Activated CD8-positive, alpha-beta T cell treated with anti-CD3 and anti-CD28 coated beads for 36 hours (primary cell): ENCODE measurements at regions of chr2 and their contacts with region 1.

Region 1: DNA sequence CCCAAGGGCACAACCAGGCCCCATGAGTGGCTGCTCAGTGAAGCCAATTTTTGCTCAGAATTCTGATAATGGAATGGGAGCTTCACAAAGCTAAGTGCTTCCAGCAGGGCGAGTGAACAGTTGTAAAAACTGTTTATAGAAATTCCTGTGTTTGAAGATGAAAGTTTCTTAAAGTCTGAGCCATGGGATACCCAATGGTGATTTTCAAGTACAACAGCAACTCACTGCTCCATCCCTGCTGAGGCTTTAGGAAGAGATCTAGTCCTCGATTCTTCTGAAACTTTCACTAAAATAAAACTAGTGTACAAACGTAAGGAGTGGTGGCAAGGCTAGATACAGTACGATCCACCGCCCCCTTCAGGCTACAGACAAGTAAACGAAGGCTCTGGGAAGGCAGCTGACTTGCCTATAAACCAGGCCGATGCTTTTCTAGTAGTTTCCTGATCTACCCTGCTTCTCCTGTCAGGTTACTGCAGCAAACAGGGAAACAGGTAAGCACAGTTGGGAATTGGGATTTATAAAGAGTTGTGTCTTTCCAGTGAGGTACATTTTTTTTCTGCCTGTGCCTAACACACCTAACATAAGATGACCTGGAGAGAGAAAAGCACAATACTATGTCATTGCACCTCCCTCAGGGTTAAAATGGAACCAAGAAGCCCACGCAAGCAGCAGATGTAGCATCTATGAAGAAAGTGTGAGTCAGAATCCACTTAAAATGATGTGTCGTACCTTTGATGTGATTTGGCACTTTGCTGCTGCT is 108.7 kb downstream of the UXS1 start:
- DNase-seq: peak; percentile 83
- ATAC-seq: peak; percentile 96
- H3K4me3 Mint-ChIP-seq: peak overlapping the region; percentile 66
- H3K27ac Mint-ChIP-seq: peak overlapping the region; percentile 93
- H3K4me1 Mint-ChIP-seq: peaks cover 68% of the 10 kb centered on the region
- H3K27me3 Mint-ChIP-seq: no peaks in the 10 kb centered on the region
- CTCF ChIP-seq: peak; percentile 60

Region 2: DNA sequence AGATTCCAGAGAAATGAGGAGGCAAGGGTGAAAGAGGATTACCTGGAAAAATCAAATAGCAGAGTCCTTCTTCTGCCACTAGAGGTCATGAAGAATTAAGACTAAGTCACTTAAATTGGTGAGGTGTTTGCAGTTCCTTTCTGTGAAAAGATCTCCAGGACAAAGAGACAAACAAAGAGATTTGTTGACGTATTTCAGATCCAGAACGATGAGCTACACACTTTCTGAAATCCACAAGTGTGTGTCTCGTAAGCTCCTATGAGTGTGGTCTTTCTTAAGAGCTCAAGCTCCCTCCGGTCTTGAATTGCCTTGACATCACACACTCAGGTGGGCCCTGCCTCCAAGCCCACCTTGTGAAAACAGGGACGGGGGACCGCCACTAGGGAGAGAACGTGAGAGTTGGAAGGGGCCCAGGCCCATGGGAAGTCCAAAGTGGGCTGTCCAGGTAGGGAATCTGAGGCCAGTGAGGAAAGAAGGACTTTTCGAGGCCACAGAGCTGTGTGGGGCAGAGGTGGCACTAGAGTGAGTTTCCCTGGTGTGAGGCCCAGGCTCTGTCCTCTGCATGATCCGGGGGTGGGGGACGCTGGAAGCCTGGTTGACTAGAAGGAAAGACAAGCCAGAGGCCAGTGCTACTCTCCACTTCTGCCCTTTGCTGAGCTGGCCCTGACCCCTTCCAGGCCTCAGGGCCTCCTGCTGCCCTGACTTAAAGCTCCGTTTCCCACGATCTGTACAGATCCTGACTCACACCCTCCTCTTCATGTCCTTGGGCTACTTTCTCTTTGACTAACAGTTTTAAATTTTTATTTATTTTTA is 508.7 kb before region 1 on chr2:
- CTCF ChIA-PET with region 1: interaction called, 16 read pairs
- POLR2A ChIA-PET with region 1: no interaction called
- intact Hi-C with region 1: no loop called
- DNase-seq: no peak
- ATAC-seq: peak; percentile 66
- H3K4me3 Mint-ChIP-seq: no peak overlapping the region
- H3K27ac Mint-ChIP-seq: peak overlapping the region; percentile 66
- H3K4me1 Mint-ChIP-seq: peaks cover 28% of the 10 kb centered on the region
- H3K27me3 Mint-ChIP-seq: no peaks in the 10 kb centered on the region
- CTCF ChIP-seq: peak; percentile 73

Region 3: DNA sequence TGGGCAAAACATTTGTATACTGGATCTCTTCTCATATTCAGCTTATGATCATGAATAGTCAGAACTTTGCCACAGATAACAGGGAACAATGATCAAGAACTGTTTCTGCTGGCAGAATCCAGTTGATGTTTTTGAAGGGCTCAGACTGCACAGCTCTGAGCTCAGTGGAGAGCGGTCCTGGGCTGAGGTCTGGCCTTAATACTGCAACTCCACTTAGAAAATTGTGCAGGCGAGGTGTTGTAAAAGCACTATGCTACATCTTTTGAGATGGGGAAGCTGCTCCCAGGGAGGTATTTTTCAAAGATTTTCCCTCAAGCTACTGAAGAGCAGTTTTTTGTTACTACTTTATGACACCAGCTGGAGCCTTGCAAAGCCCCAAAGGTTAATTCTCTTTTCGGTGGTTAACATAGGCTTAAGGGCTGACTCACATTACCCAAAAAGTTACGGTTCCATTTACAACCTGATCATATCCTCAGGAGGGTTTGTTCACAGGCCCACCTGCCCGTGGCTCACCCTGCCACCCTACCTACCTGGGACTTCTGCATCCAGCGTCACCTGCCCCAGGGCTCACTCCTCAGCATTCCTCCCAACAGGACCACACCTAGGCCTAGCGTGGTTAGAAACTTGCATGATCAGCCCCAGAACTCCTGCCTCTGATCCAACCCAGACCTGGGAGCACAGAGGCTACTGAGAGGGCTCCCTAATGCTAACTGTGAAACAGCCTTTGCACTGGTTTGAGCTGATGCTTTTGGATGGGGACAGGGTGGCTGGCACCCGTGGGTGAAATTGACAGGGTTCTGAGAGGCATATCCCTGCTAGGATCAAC is 226.3 kb before region 1 on chr2:
- CTCF ChIA-PET with region 1: interaction called, 4 read pairs
- POLR2A ChIA-PET with region 1: no interaction called
- intact Hi-C with region 1: loop called (anchors 5 kb)
- DNase-seq: peak; percentile 62
- ATAC-seq: peak; percentile 64
- H3K4me3 Mint-ChIP-seq: peak overlapping the region; percentile 27
- H3K27ac Mint-ChIP-seq: peak overlapping the region; percentile 92
- H3K4me1 Mint-ChIP-seq: peaks cover 93% of the 10 kb centered on the region
- H3K27me3 Mint-ChIP-seq: no peaks in the 10 kb centered on the region
- CTCF ChIP-seq: no peak

Region 4: GRCh38 chr2:106068451-106068850 is 16.9 kb before region 1 on chr2:
- CTCF ChIA-PET with region 1: interaction called, 11 read pairs
- POLR2A ChIA-PET with region 1: interaction called, 5 read pairs
- intact Hi-C with region 1: no loop called
- DNase-seq: no peak
- ATAC-seq: no peak
- H3K4me3 Mint-ChIP-seq: no peak overlapping the region
- H3K27ac Mint-ChIP-seq: no peak overlapping the region
- H3K4me1 Mint-ChIP-seq: peaks cover 19% of the 10 kb centered on the region
- H3K27me3 Mint-ChIP-seq: peaks cover 2% of the 10 kb centered on the region
- CTCF ChIP-seq: no peak

Region 5: GRCh38 chr2:106098081-106098480 is 12.7 kb after region 1 on chr2:
- CTCF ChIA-PET with region 1: interaction called, 20 read pairs
- POLR2A ChIA-PET with region 1: interaction called, 7 read pairs
- intact Hi-C with region 1: no loop called
- DNase-seq: peak; percentile 57
- ATAC-seq: no peak
- H3K4me3 Mint-ChIP-seq: no peak overlapping the region
- H3K27ac Mint-ChIP-seq: peak overlapping the region; percentile 21
- H3K4me1 Mint-ChIP-seq: peaks cover 43% of the 10 kb centered on the region
- H3K27me3 Mint-ChIP-seq: no peaks in the 10 kb centered on the region
- CTCF ChIP-seq: peak; percentile 46